ENCODE measurements at regions of chr11 and their contacts with region 1.

Region 1: GRCh38 chr11:9972989-9973388 is 309.1 kb downstream of the SWAP70 start:
- DNase-seq: peak; percentile 68
- H3K4me3 ChIP-seq: no peak overlapping the region
- H3K27ac ChIP-seq: no peak overlapping the region
- H3K4me1 ChIP-seq: peaks cover 12% of the 10 kb centered on the region
- H3K27me3 ChIP-seq: no peaks in the 10 kb centered on the region
- CTCF ChIP-seq: peak; percentile 78

Region 2: GRCh38 chr11:9861860-9862725 is 110.9 kb before region 1 on chr11:
- CTCF ChIA-PET with region 1: interaction called, 8 read pairs
- POLR2A ChIA-PET with region 1: no interaction called
- intact Hi-C with region 1: loop called (anchors 2 kb)
- DNase-seq: peak; percentile 81
- H3K4me3 ChIP-seq: no peak overlapping the region
- H3K27ac ChIP-seq: peak overlapping the region; percentile 49
- H3K4me1 ChIP-seq: peaks cover 49% of the 10 kb centered on the region
- H3K27me3 ChIP-seq: no peaks in the 10 kb centered on the region
- CTCF ChIP-seq: peak; percentile 86

Region 3: GRCh38 chr11:9906043-9906791 is 66.8 kb before region 1 on chr11:
- CTCF ChIA-PET with region 1: no interaction called
- POLR2A ChIA-PET with region 1: no interaction called
- intact Hi-C with region 1: loop called (anchors 5 kb)
- DNase-seq: peak; percentile 95
- H3K4me3 ChIP-seq: no peak overlapping the region
- H3K27ac ChIP-seq: peak overlapping the region; percentile 88
- H3K4me1 ChIP-seq: peaks cover 31% of the 10 kb centered on the region
- H3K27me3 ChIP-seq: no peaks in the 10 kb centered on the region
- CTCF ChIP-seq: no peak

Measured in A673 (cell line).